ENCODE measurements at regions of chr2 and their contacts with region 1.

Region 1: DNA sequence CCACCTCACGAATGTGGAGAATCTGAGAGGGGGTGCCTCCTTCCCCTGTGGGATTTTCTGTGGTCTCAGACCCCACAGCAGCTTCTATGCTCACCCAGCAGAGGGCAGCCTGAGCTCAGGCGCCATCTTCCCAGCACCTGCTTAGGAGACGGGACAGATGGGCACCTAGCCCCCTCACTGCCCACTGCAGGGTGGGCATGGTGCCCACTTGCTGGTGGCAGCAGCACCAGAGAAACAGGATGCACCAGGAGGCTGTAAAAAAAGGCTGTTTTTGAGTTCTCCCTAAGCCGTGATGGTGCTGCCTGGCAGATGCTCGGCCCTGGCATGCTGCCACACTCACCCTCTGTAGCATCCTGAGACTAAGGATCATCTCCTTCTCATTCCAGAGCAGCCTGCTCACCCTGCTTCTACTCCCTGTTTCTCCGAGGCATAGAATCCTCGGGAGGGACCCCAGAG is 19.1 kb upstream of the SLC20A1 start:
- DNase-seq: peak; percentile 70
- H3K4me3 Mint-ChIP-seq: peak overlapping the region; percentile 51
- H3K27ac Mint-ChIP-seq: peak overlapping the region; percentile 98
- H3K4me1 Mint-ChIP-seq: peaks cover 88% of the 10 kb centered on the region
- H3K27me3 Mint-ChIP-seq: no peaks in the 10 kb centered on the region

Region 2: DNA sequence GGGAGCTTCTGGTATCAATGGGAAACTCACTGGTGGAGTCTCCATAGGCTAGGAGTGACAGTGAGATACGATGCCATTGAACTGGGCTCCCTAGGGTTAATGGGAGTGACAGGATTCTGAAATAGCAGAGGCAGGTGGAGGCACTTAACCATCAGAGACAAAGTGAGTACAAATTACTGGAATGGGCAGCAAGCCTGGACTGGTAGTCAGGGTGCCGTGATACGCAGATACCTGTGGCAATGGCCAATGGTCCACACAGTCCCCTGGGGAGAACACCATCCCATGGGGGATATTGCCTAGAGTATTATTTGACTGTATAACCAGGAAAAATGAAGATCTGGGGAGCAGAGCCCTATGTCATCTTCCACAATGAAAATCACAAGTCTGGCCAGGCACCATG is 24.9 kb before region 1 on chr2:
- CTCF ChIA-PET with region 1: interaction called, 12 read pairs
- POLR2A ChIA-PET with region 1: interaction called, 8 read pairs
- DNase-seq: no peak
- H3K4me3 Mint-ChIP-seq: no peak overlapping the region
- H3K27ac Mint-ChIP-seq: no peak overlapping the region
- H3K4me1 Mint-ChIP-seq: peaks cover 8% of the 10 kb centered on the region
- H3K27me3 Mint-ChIP-seq: no peaks in the 10 kb centered on the region

Region 3: GRCh38 chr2:112645310-112646101 is 18.9 kb after region 1 on chr2 and contains the start of gene SLC20A1:
- CTCF ChIA-PET with region 1: interaction called, 35 read pairs
- POLR2A ChIA-PET with region 1: interaction called, 5 read pairs
- DNase-seq: peak; percentile 97
- H3K4me3 Mint-ChIP-seq: peak within 1 kb of the TSS; percentile 99
- H3K27ac Mint-ChIP-seq: peak within 1 kb of the TSS; percentile 91
- H3K4me1 Mint-ChIP-seq: peaks cover 66% of the 10 kb centered on the region
- H3K27me3 Mint-ChIP-seq: no peaks in the 10 kb centered on the region
- total RNA-seq, gene SLC20A1: 165 to 167 TPM

Region 4: GRCh38 chr2:112685271-112685884 is 58.7 kb after region 1 on chr2:
- CTCF ChIA-PET with region 1: interaction called, 20 read pairs
- POLR2A ChIA-PET with region 1: no interaction called
- DNase-seq: no peak
- H3K4me3 Mint-ChIP-seq: no peak overlapping the region
- H3K27ac Mint-ChIP-seq: no peak overlapping the region
- H3K4me1 Mint-ChIP-seq: peaks cover 29% of the 10 kb centered on the region
- H3K27me3 Mint-ChIP-seq: no peaks in the 10 kb centered on the region

Region 5: DNA sequence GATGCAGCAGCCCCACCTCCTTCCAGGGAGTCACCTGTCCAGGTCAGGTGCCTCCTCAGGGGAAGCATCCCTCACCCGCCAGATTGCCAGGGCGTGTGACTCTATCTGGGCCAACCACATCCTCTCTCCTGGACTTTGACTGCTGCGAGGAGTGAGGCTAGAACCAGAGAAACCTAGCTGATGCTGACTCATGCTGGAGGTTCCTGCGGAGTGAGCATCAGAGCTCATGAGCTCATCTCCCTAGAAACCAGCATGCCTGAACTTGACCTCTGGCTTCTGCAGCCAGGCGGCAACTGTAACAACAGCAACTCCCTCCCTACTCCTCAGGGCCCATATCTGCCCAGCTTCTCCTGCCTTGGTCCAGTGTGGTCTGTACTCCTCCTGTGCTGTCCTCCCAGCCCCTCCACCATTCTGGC is 65.9 kb after region 1 on chr2:
- CTCF ChIA-PET with region 1: interaction called, 20 read pairs
- POLR2A ChIA-PET with region 1: no interaction called
- DNase-seq: peak; percentile 76
- H3K4me3 Mint-ChIP-seq: peak overlapping the region; percentile 2
- H3K27ac Mint-ChIP-seq: peak overlapping the region; percentile 88
- H3K4me1 Mint-ChIP-seq: peaks cover 34% of the 10 kb centered on the region
- H3K27me3 Mint-ChIP-seq: no peaks in the 10 kb centered on the region

Region 6: GRCh38 chr2:112706170-112706664 is 79.6 kb after region 1 on chr2:
- CTCF ChIA-PET with region 1: interaction called, 18 read pairs
- POLR2A ChIA-PET with region 1: no interaction called
- DNase-seq: peak; percentile 88
- H3K4me3 Mint-ChIP-seq: peak overlapping the region; percentile 17
- H3K27ac Mint-ChIP-seq: peak overlapping the region; percentile 38
- H3K4me1 Mint-ChIP-seq: peaks cover 52% of the 10 kb centered on the region
- H3K27me3 Mint-ChIP-seq: peaks cover 11% of the 10 kb centered on the region

Region 7: GRCh38 chr2:112811841-112812306 is 185.2 kb after region 1 on chr2:
- CTCF ChIA-PET with region 1: no interaction called
- POLR2A ChIA-PET with region 1: no interaction called
- DNase-seq: no peak
- H3K4me3 Mint-ChIP-seq: no peak overlapping the region
- H3K27ac Mint-ChIP-seq: no peak overlapping the region
- H3K4me1 Mint-ChIP-seq: peaks cover 12% of the 10 kb centered on the region
- H3K27me3 Mint-ChIP-seq: no peaks in the 10 kb centered on the region

Region 8: DNA sequence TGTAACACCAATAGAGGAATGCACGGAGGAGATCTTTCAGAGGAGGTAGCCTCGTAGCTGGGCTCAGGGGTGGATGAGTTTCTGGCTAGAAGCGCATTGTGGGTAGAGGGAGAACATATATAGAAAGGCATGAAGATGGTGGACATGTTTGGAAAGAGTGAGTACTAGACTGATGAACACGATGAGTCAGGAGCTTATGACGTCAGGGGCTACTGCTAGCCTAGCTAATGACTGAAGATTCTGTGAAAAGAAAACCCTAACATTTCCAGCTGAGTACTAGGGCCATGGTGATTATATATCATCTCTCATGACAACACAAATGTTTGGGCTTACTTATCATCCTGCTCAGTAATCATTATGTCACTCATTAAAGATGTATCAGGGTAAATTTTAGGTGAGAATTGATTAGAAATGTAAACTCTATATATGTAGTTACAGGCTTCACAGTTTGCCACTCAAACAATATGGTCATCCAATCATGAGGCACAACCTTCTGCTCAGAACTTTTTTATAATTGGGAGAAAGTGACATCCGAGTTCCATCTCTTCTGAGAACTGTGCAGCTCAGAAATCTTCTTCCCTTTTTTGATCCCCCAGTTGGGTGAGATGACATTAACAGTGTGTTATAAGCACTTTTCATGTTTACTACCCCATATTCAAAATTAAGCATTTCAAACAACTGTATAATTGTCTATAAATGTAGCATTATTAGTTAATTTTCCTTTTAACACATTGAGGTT is 478.6 kb after region 1 on chr2:
- CTCF ChIA-PET with region 1: no interaction called
- POLR2A ChIA-PET with region 1: no interaction called
- DNase-seq: no peak
- H3K4me3 Mint-ChIP-seq: no peak overlapping the region
- H3K27ac Mint-ChIP-seq: no peak overlapping the region
- H3K4me1 Mint-ChIP-seq: peaks cover 26% of the 10 kb centered on the region
- H3K27me3 Mint-ChIP-seq: peaks cover 8% of the 10 kb centered on the region